Activated naive CD8-positive, alpha-beta T cell treated with anti-CD3 and anti-CD28 coated beads, Interleukin-2, amount 10 ng/mL, durations not matched to agents 7 days and 5 days (primary cell): ENCODE measurements at regions of chr17 and their contacts with region 1.

Region 1: GRCh38 chr17:21214015-21214776 is at the start of gene TMEM11:
- DNase-seq: peak; percentile 98
- ATAC-seq: peak; percentile 91
- H3K4me3 Mint-ChIP-seq: peak within 1 kb of the TSS; percentile 96
- H3K27ac Mint-ChIP-seq: peak within 1 kb of the TSS; percentile 94
- H3K4me1 Mint-ChIP-seq: peaks cover 41% of the 10 kb centered on the region
- H3K27me3 Mint-ChIP-seq: no peaks in the 10 kb centered on the region
- total RNA-seq, gene TMEM11: 21.4 to 23.7 TPM

Region 2: DNA sequence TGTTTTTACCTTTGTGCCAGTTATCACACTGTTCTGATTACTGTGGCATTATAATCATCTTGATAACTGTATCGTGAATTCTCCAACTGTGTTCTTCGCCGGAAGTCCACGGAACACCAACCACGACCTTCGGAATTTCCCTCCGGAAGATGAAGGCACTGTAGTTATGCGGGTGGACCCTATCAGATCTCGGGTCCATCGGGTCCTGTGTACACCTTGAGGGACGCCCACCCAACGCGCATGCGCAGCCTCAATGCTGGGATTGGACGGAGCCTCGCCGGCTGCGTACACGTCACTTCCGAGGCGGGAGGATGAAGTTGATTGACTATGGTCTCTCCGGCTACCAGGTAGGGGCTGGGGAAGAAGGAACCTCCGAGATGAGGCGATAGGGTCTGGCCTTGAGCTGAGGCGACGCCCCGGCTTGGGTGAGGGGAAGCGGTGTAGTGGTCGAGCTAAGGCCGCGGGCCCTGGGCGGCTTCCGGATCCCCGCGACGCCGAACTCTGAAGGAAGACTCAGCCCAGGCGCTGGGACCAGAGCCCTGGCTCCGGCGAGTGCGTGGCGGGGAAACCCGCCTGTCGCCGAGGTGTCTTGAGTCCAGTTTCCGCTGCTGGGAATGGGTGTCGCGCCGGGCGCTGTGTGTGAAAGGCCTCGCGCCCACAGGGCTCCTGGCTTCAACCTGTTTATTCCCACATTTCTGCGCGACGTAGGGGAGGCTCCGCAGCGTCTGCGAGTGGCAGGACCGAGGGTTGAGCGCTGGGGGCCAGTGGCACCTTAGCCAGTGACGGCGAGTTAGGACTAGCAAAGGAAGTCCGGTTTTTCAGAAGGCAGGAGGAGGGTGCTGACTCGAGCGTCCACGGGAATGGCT is 87.3 kb before region 1 on chr17 and contains the start of gene DHRS7B:
- POLR2A ChIA-PET with region 1: interaction called, 15 read pairs
- DNase-seq: peak; percentile 97
- ATAC-seq: peak; percentile 94
- H3K4me3 Mint-ChIP-seq: peak within 1 kb of the TSS; percentile 93
- H3K27ac Mint-ChIP-seq: peak within 1 kb of the TSS; percentile 90
- H3K4me1 Mint-ChIP-seq: peaks cover 26% of the 10 kb centered on the region
- H3K27me3 Mint-ChIP-seq: no peaks in the 10 kb centered on the region
- total RNA-seq, gene DHRS7B: 12.6 to 14.2 TPM

Region 3: GRCh38 chr17:21174713-21175112 is 39.5 kb before region 1 on chr17:
- POLR2A ChIA-PET with region 1: no interaction called
- DNase-seq: no peak
- ATAC-seq: no peak
- H3K4me3 Mint-ChIP-seq: no peak overlapping the region
- H3K27ac Mint-ChIP-seq: no peak overlapping the region
- H3K4me1 Mint-ChIP-seq: no peaks in the 10 kb centered on the region
- H3K27me3 Mint-ChIP-seq: no peaks in the 10 kb centered on the region